CD4-positive, alpha-beta T cell (primary cell): ENCODE measurements at regions of chr6 and their contacts with region 1.

Region 1: GRCh38 chr6:117602151-117602898 is at the start of gene GOPC:
- DNase-seq: peak; percentile 87 to 100 (median 94)
- ATAC-seq: peak; percentile 96
- H3K4me3 ChIP-seq: peak within 1 kb of the TSS; percentile 94
- H3K4me3 Mint-ChIP-seq: peak within 1 kb of the TSS; percentile 99
- H3K27ac ChIP-seq: peak within 1 kb of the TSS; percentile 82 to 86
- H3K27ac Mint-ChIP-seq: peak within 1 kb of the TSS; percentile 92
- H3K4me1 ChIP-seq: peaks cover 15% of the 10 kb centered on the region
- H3K4me1 Mint-ChIP-seq: peaks cover 52% of the 10 kb centered on the region
- H3K27me3 ChIP-seq: no peaks in the 10 kb centered on the region
- H3K27me3 Mint-ChIP-seq: no peaks in the 10 kb centered on the region
- CTCF ChIP-seq: no peak
- total RNA-seq, gene GOPC: 9.7 to 10.8 TPM

Region 2: DNA sequence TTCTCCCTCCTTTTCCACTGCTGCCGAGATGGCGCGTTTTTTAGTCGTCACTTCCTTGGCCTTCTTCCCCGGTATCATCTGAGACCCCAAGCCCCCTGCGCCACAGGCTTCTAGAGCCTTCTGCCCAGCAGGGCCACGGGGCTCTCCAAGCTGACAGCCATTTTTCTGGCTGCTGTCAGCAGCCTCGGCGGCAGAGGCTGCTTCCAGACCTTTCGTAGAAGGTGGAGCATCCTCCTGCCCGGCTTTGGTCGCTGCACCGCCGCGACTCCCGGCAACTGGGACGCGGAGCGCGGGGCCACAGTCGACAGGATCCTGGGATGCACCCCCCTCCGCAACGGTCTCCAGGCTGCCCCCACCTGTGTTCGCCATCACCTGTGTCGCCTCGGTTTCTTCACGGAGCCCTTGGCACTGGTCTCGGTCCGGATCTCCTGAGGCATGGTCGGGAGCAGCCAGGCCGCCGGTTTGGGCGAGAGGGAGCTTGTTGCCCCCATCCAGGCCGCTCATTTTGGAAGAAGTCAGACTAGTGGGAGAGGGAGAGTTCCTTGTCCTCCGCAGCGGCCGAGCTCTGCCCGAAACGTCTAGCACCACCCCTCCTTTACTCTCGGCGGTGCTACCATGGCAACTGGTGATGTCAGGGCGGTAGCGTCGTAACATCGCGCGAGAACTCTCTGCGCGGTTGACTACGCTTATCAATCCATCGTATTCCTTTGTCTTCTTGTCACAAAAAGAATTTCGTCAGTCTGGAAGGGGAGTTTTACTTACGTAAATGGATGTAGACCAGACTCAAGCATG is 1348.6 kb before region 1 on chr6 and contains the start of gene TSPYL4:
- CTCF ChIA-PET with region 1: no interaction called
- POLR2A ChIA-PET with region 1: no interaction called
- intact Hi-C with region 1: loop called in 1 of 2 experiments (anchors 5 kb)
- DNase-seq: peak; percentile 80 to 98 (median 88)
- ATAC-seq: peak; percentile 96
- H3K4me3 ChIP-seq: peak within 1 kb of the TSS; percentile 91
- H3K4me3 Mint-ChIP-seq: no peak within 1 kb of the TSS
- H3K27ac ChIP-seq: peak within 1 kb of the TSS; percentile 92 to 94
- H3K27ac Mint-ChIP-seq: no peak within 1 kb of the TSS
- H3K4me1 ChIP-seq: peaks cover 31% of the 10 kb centered on the region
- H3K4me1 Mint-ChIP-seq: peaks cover 6% of the 10 kb centered on the region
- H3K27me3 ChIP-seq: no peaks in the 10 kb centered on the region
- H3K27me3 Mint-ChIP-seq: no peaks in the 10 kb centered on the region
- CTCF ChIP-seq: no peak
- total RNA-seq, gene TSPYL4: 35.9 to 37.7 TPM

Region 3: GRCh38 chr6:117449549-117450439 is 152.5 kb before region 1 on chr6:
- CTCF ChIA-PET with region 1: interaction called, 13 read pairs
- POLR2A ChIA-PET with region 1: interaction called, 7 read pairs
- intact Hi-C with region 1: loop called (anchors 1 to 2 kb)
- DNase-seq: peak; percentile 13 to 82 (median 50)
- ATAC-seq: peak; percentile 52
- H3K4me3 ChIP-seq: no peak overlapping the region
- H3K4me3 Mint-ChIP-seq: no peak overlapping the region
- H3K27ac ChIP-seq: no peak overlapping the region
- H3K27ac Mint-ChIP-seq: no peak overlapping the region
- H3K4me1 ChIP-seq: no peaks in the 10 kb centered on the region
- H3K4me1 Mint-ChIP-seq: no peaks in the 10 kb centered on the region
- H3K27me3 ChIP-seq: peaks cover 0 to 28% of the 10 kb centered on the region in 2 experiments
- H3K27me3 Mint-ChIP-seq: peaks cover 54% of the 10 kb centered on the region
- CTCF ChIP-seq: peak; percentile 78

Region 4: DNA sequence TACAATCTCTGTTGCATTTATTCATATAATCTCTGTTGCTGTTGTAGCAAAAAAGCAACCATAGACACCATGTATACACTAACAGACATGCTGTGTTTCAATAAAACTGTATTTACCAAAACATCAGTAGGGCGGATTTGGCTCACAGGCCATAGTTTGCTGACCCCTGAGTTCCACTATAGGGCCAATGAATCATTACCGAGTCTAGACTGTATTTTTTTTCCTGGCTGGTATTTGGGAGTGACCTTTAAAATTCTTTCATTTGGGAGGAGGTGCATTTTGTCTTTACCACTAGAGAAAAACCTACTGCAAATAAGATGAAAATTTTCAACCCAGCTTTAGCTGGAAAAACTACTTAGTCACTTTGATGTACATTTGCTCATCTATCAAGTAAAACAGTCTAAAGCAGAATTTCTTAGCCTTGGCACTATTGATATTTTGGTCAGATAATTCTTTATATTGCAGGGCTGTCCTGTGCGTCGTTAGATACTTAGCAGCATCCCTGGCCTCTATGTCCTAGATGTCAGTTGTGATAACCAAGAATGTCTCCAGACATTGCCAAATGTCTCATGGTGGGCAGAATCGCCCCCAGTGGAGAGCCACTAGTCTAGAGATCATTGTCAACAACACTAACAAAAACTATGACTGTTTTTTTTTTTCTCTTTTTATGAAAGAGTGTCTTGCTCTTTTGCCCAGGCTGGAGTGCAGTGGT is 80.4 kb before region 1 on chr6:
- CTCF ChIA-PET with region 1: no interaction called
- POLR2A ChIA-PET with region 1: no interaction called
- intact Hi-C with region 1: no loop called
- DNase-seq: no peak
- ATAC-seq: no peak
- H3K4me3 ChIP-seq: no peak overlapping the region
- H3K4me3 Mint-ChIP-seq: no peak overlapping the region
- H3K27ac ChIP-seq: no peak overlapping the region
- H3K27ac Mint-ChIP-seq: no peak overlapping the region
- H3K4me1 ChIP-seq: no peaks in the 10 kb centered on the region
- H3K4me1 Mint-ChIP-seq: no peaks in the 10 kb centered on the region
- H3K27me3 ChIP-seq: no peaks in the 10 kb centered on the region
- H3K27me3 Mint-ChIP-seq: peaks cover 11% of the 10 kb centered on the region
- CTCF ChIP-seq: no peak

Region 5: DNA sequence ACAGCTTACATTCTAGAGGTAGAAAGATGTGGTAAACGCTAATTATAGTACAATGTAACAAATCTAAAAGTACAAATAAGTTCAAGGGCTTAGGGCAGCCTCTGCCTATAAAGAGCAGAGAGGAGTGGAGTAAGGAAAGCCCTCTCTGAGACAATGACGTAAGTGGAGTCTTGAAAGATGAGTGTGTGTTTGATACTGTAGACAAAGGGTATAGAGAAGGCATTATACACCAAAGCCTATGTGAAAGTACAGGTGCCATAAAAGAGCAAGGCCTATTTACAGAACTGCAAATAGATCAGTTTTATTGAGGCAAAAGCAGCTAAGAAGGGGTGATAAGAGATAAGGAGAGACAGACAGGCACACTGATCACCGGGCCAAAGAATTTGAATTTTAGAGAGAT is 10.9 kb before region 1 on chr6:
- CTCF ChIA-PET with region 1: interaction called, 5 read pairs
- POLR2A ChIA-PET with region 1: interaction called, 12 read pairs
- intact Hi-C with region 1: no loop called
- DNase-seq: no peak
- ATAC-seq: no peak
- H3K4me3 ChIP-seq: no peak overlapping the region
- H3K4me3 Mint-ChIP-seq: no peak overlapping the region
- H3K27ac ChIP-seq: no peak overlapping the region
- H3K27ac Mint-ChIP-seq: no peak overlapping the region
- H3K4me1 ChIP-seq: peaks cover 3% of the 10 kb centered on the region
- H3K4me1 Mint-ChIP-seq: peaks cover 26% of the 10 kb centered on the region
- H3K27me3 ChIP-seq: no peaks in the 10 kb centered on the region
- H3K27me3 Mint-ChIP-seq: no peaks in the 10 kb centered on the region
- CTCF ChIP-seq: no peak

Region 6: GRCh38 chr6:117655380-117655779 is 53.1 kb after region 1 on chr6:
- CTCF ChIA-PET with region 1: no interaction called
- POLR2A ChIA-PET with region 1: no interaction called
- intact Hi-C with region 1: no loop called
- DNase-seq: no peak
- ATAC-seq: peak; percentile 60
- H3K4me3 ChIP-seq: no peak overlapping the region
- H3K4me3 Mint-ChIP-seq: no peak overlapping the region
- H3K27ac ChIP-seq: no peak overlapping the region
- H3K27ac Mint-ChIP-seq: no peak overlapping the region
- H3K4me1 ChIP-seq: no peaks in the 10 kb centered on the region
- H3K4me1 Mint-ChIP-seq: peaks cover 10% of the 10 kb centered on the region
- H3K27me3 ChIP-seq: no peaks in the 10 kb centered on the region
- H3K27me3 Mint-ChIP-seq: no peaks in the 10 kb centered on the region
- CTCF ChIP-seq: no peak

Region 7: GRCh38 chr6:119349323-119350042 is 1747.2 kb after region 1 on chr6 and contains the start of gene MAN1A1:
- CTCF ChIA-PET with region 1: no interaction called
- POLR2A ChIA-PET with region 1: no interaction called
- intact Hi-C with region 1: loop called in 1 of 2 experiments (anchors 10 kb)
- DNase-seq: peak; percentile 74 to 95 (median 86)
- ATAC-seq: peak; percentile 86
- H3K4me3 ChIP-seq: peak within 1 kb of the TSS; percentile 96
- H3K4me3 Mint-ChIP-seq: peak within 1 kb of the TSS; percentile 89
- H3K27ac ChIP-seq: peak within 1 kb of the TSS; percentile 67 to 84
- H3K27ac Mint-ChIP-seq: peak within 1 kb of the TSS; percentile 85
- H3K4me1 ChIP-seq: peaks cover 20% of the 10 kb centered on the region
- H3K4me1 Mint-ChIP-seq: peaks cover 65% of the 10 kb centered on the region
- H3K27me3 ChIP-seq: no peaks in the 10 kb centered on the region
- H3K27me3 Mint-ChIP-seq: no peaks in the 10 kb centered on the region
- CTCF ChIP-seq: no peak
- total RNA-seq, gene MAN1A1: 4.5 to 4.9 TPM